Sigmoid colon (tissue), 7 donors: ENCODE measurements at regions of chrX and their contacts with region 1.

Region 1: DNA sequence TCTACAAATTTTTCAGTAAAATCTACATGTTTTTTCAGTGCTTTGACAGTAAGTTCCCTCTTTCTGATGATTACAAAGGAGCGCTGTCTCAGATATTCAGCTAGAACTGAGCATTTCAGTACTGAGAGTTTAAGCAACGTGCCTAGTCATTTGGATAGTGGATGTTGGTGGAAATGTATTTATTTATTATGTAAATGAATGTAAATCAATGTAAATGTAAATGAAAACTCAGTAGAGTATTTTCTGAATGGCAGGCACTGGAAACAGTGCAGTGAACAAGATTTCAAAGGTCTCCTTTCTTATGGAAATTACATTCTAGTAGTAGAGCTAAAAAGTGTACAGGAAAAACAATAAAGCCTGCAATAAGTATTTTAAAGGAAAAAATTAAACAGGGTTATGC is 370.2 kb upstream of the SPANXN4 start:
- DNase-seq: no peak
- H3K4me3 ChIP-seq: no peak overlapping the region
- H3K27ac ChIP-seq: no peak overlapping the region
- H3K4me1 ChIP-seq: no peaks in the 10 kb centered on the region
- H3K27me3 ChIP-seq: no peaks in the 10 kb centered on the region
- CTCF ChIP-seq: no peak
- EP300 ChIP-seq: no peak
- POLR2A ChIP-seq: no peak

Region 2: GRCh38 chrX:141443922-141444321 is 1211.6 kb before region 1 on chrX:
- intact Hi-C with region 1: no loop called
- DNase-seq: no peak
- H3K4me3 ChIP-seq: no peak overlapping the region
- H3K27ac ChIP-seq: no peak overlapping the region
- H3K4me1 ChIP-seq: no peaks in the 10 kb centered on the region
- H3K27me3 ChIP-seq: no peaks in the 10 kb centered on the region
- CTCF ChIP-seq: no peak
- EP300 ChIP-seq: no peak
- POLR2A ChIP-seq: no peak

Region 3: GRCh38 chrX:142256935-142257334 is 398.6 kb before region 1 on chrX:
- intact Hi-C with region 1: loop called (anchors 5 kb)
- DNase-seq: no peak
- H3K4me3 ChIP-seq: no peak overlapping the region
- H3K27ac ChIP-seq: no peak overlapping the region
- H3K4me1 ChIP-seq: no peaks in the 10 kb centered on the region
- H3K27me3 ChIP-seq: no peaks in the 10 kb centered on the region
- CTCF ChIP-seq: no peak
- EP300 ChIP-seq: no peak
- POLR2A ChIP-seq: no peak

Region 4: GRCh38 chrX:142446349-142446748 is 209.2 kb before region 1 on chrX:
- intact Hi-C with region 1: no loop called
- DNase-seq: no peak
- H3K4me3 ChIP-seq: no peak overlapping the region
- H3K27ac ChIP-seq: no peak overlapping the region
- H3K4me1 ChIP-seq: no peaks in the 10 kb centered on the region
- H3K27me3 ChIP-seq: no peaks in the 10 kb centered on the region
- CTCF ChIP-seq: no peak
- EP300 ChIP-seq: no peak
- POLR2A ChIP-seq: no peak